Mammary epithelial cell (primary cell): ENCODE measurements at regions of chr7 and their contacts with region 1.

Region 1: GRCh38 chr7:144020360-144020759 is 20.2 kb downstream of the OR6B1 start:
- DNase-seq: no peak
- H3K4me3 ChIP-seq: no peak overlapping the region
- H3K27ac ChIP-seq: no peak overlapping the region
- H3K4me1 ChIP-seq: no peaks in the 10 kb centered on the region
- H3K27me3 ChIP-seq: no peaks in the 10 kb centered on the region
- CTCF ChIP-seq: no peak

Region 2: DNA sequence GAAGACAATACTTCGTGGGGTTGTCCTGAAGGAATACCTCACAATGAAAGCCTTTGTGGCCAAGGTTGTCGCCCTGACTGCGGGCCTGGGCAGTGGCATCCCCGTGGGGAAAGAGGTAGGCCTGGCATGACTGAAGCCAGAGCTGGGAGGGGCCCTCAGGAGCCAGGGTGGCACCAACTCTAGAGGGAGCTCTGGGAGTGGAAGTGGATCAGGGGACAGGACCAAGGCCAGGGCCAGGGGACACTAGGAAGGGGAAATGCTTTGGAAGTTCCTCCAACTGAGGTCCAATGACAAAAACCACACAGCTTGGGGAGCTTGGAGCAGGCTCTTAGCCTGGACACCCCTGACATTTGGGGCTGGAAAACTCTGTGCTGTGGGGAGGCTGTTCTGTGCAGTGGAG is 698.6 kb before region 1 on chr7:
- CTCF ChIA-PET with region 1: no interaction called
- dilution Hi-C with region 1: no loop called
- in situ Hi-C with region 1: no loop called
- intact Hi-C with region 1: no loop called
- DNase-seq: no peak
- H3K4me3 ChIP-seq: no peak overlapping the region
- H3K27ac ChIP-seq: no peak overlapping the region
- H3K4me1 ChIP-seq: peaks cover 15% of the 10 kb centered on the region
- H3K27me3 ChIP-seq: no peaks in the 10 kb centered on the region
- CTCF ChIP-seq: peak in 1 of 2 donors; percentile 64

Region 3: GRCh38 chr7:143988976-143989745 is 31.2 kb before region 1 on chr7:
- CTCF ChIA-PET with region 1: no interaction called
- dilution Hi-C with region 1: loop called (anchors 5 kb)
- in situ Hi-C with region 1: no loop called
- intact Hi-C with region 1: no loop called
- DNase-seq: no peak
- H3K4me3 ChIP-seq: no peak overlapping the region
- H3K27ac ChIP-seq: no peak overlapping the region
- H3K4me1 ChIP-seq: no peaks in the 10 kb centered on the region
- H3K27me3 ChIP-seq: no peaks in the 10 kb centered on the region
- CTCF ChIP-seq: no peak

Region 4: DNA sequence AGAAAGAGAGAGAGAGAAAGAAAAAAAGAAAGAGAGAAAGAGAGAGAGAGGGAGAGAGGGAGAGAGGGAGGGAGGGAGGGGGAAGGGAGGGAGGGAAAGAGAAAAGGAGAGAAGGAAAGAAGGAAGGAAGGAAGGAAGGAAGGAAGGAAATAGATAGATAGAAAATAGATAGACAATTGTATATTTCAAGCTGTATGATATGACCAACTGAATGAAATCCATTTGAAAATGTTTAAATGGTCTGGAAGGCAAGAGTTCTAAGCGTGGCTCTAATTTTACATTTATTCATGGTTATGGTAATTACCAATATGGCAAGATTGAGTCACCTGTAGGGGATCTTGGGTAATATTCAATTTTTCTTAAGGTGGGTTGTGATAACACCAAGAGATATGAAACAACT is 138.5 kb after region 1 on chr7:
- CTCF ChIA-PET with region 1: no interaction called
- dilution Hi-C with region 1: no loop called
- in situ Hi-C with region 1: no loop called
- intact Hi-C with region 1: no loop called
- DNase-seq: no peak
- H3K4me3 ChIP-seq: no peak overlapping the region
- H3K27ac ChIP-seq: no peak overlapping the region
- H3K4me1 ChIP-seq: no peaks in the 10 kb centered on the region
- H3K27me3 ChIP-seq: no peaks in the 10 kb centered on the region
- CTCF ChIP-seq: no peak

Region 5: DNA sequence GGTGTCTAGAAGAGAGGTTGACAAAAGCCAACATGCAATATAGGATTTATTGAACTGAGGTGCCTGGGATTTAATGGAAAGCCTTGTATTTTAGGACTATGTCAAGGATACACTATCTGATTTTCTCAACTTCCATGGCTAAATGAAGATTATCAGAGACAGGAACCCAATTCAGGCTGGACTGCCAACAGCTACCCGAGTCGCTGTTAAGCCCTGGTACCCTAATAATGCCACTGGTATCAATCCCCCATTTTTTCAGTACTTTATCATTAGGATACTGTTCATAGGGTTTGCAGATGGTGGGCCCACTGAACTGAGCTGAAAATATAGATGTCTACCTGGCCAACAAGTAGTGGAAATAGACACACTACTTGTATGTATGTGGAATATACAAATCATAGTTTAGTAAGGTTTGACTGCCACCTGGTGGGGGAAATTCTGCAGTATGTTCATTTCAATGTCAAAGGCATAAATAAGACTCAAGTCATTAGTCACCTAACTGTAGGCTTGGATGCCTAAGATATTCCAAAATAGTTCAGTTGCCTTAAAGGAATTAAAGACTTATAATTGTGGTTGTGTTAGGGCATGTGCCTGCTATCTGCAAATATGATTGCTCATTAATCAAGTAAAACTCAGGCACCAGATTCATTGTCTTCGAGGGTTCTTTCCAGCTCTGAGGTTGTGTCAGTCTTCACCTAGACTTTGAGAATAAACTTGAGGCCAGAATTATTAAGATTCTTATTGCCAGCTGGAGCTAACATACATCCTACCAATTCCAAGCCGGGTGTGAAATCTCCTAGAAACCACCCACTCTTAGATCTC is 417.2 kb after region 1 on chr7:
- CTCF ChIA-PET with region 1: no interaction called
- dilution Hi-C with region 1: no loop called
- in situ Hi-C with region 1: no loop called
- intact Hi-C with region 1: no loop called
- DNase-seq: peak; percentile 67
- H3K4me3 ChIP-seq: no peak overlapping the region
- H3K27ac ChIP-seq: no peak overlapping the region
- H3K4me1 ChIP-seq: no peaks in the 10 kb centered on the region
- H3K27me3 ChIP-seq: no peaks in the 10 kb centered on the region
- CTCF ChIP-seq: peak; percentile 69 to 74